Activated T-helper 1 cell treated with anti-CD3 and anti-CD28 coated beads, Interleukin-12 subunit alpha, Interleukin-12 subunit beta, Interleukin-2, Interleukin-4 antibody, amounts not matched to agents 30 ng/mL and 10 ng/mL and 1 ng/mL, durations not matched to agents 14 hours and 24 hours and 36 hours (primary cell): ENCODE measurements at regions of chr1 and their contacts with region 1.

Region 1: DNA sequence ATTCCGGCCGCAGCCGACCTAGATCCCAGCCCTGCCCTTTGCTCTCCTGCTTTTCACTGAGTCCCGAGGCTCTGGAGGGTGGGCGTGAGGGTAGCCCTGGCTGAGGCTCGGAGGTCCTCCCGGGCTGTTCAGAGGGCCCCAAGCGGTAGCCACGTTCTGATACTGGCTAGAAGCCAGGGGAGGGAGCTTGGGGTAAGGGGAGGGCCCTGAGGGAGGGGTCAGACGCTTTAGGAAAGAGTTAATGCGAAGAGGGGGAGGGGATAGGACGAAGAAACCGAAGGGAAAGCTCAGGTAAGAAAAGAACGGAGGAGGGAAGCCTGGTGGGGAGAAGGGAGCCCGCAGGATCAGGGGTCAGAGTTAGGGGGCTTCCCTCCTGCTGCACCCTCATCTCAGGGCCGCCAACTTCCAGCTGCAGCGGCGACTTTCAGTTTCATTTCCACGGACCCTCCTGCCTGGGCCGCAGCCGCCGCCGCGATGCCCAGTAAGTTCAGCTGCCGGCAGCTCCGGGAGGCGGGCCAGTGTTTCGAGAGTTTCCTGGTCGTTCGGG is at the start of gene MOV10:
- DNase-seq: peak; percentile 59
- H3K4me3 Mint-ChIP-seq: peak within 1 kb of the TSS; percentile 97
- H3K27ac Mint-ChIP-seq: peak within 1 kb of the TSS; percentile 98
- H3K4me1 Mint-ChIP-seq: peaks cover 61% of the 10 kb centered on the region
- H3K27me3 Mint-ChIP-seq: no peaks in the 10 kb centered on the region
- total RNA-seq, gene MOV10: 64.6 and 66.2 TPM in 2 replicates

Region 2: GRCh38 chr1:112501810-112502641 is 172.5 kb before region 1 on chr1:
- intact Hi-C with region 1: loop called (anchors 10 kb)
- DNase-seq: peak; percentile 33
- H3K4me3 Mint-ChIP-seq: peak overlapping the region; percentile 63
- H3K27ac Mint-ChIP-seq: no peak overlapping the region
- H3K4me1 Mint-ChIP-seq: peaks cover 5% of the 10 kb centered on the region
- H3K27me3 Mint-ChIP-seq: peaks cover 62% of the 10 kb centered on the region

Region 3: DNA sequence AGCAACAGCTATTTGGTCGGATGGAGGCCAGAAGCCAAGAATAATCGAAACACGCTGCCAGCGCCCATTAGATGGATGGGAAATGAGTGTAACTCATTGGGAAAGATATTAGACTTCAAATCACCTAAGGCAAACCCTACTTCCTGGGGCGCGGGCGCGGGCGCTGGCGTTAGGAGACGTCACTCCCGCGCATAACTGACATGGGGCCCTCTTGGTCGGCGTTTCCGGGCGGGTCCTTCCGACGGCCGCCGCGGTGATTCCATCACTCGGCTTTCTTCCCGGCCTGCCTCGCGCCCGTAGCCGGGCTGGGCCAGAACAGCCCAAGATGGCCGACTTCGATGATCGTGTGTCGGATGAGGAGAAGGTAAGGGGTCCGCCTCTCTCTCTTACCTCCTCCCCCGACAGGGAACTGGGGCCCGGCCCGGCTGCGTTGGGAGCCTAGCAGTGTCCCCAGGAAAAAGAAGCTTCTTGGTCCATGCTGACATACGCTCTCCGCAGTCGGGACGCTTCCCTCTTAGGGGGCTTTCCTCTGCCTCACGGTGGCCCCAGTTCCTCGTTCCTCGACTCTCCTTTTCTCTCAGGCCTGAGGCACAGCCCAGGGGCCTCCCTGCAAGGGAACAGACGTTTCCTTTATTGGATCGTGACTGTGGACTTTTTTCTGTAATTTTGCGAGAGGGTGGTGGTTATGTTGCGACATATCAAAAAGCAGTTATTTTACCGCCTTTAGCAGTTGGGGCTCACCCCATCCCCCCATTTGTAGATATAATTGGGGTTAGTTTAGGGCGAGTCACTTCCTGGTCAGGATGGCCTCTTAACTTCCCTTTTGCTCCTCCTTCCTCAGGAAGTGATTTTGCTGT is 54.8 kb before region 1 on chr1 and contains the start of gene CAPZA1:
- intact Hi-C with region 1: loop called (anchors 1 kb)
- DNase-seq: peak; percentile 90
- H3K4me3 Mint-ChIP-seq: peak within 1 kb of the TSS; percentile 98
- H3K27ac Mint-ChIP-seq: peak within 1 kb of the TSS; percentile 98
- H3K4me1 Mint-ChIP-seq: peaks cover 48% of the 10 kb centered on the region
- H3K27me3 Mint-ChIP-seq: no peaks in the 10 kb centered on the region
- total RNA-seq, gene CAPZA1: 239 and 242 TPM in 2 replicates